CD4-positive, alpha-beta T cell (primary cell): ENCODE measurements at regions of chr12 and their contacts with region 1.

Region 1: GRCh38 chr12:49188914-49189367 is at the start of gene TUBA1A:
- DNase-seq: peak; percentile 92 to 99 (median 94)
- ATAC-seq: peak; percentile 83
- H3K4me3 ChIP-seq: peak within 1 kb of the TSS; percentile 95
- H3K4me3 Mint-ChIP-seq: peak within 1 kb of the TSS; percentile 96
- H3K27ac ChIP-seq: peak within 1 kb of the TSS; percentile 98 to 100
- H3K27ac Mint-ChIP-seq: peak within 1 kb of the TSS; percentile 99
- H3K4me1 ChIP-seq: peaks cover 15% of the 10 kb centered on the region
- H3K4me1 Mint-ChIP-seq: peaks cover 21% of the 10 kb centered on the region
- H3K27me3 ChIP-seq: no peaks in the 10 kb centered on the region
- H3K27me3 Mint-ChIP-seq: no peaks in the 10 kb centered on the region
- CTCF ChIP-seq: no peak
- total RNA-seq, gene TUBA1A: 295 to 305 TPM

Region 2: DNA sequence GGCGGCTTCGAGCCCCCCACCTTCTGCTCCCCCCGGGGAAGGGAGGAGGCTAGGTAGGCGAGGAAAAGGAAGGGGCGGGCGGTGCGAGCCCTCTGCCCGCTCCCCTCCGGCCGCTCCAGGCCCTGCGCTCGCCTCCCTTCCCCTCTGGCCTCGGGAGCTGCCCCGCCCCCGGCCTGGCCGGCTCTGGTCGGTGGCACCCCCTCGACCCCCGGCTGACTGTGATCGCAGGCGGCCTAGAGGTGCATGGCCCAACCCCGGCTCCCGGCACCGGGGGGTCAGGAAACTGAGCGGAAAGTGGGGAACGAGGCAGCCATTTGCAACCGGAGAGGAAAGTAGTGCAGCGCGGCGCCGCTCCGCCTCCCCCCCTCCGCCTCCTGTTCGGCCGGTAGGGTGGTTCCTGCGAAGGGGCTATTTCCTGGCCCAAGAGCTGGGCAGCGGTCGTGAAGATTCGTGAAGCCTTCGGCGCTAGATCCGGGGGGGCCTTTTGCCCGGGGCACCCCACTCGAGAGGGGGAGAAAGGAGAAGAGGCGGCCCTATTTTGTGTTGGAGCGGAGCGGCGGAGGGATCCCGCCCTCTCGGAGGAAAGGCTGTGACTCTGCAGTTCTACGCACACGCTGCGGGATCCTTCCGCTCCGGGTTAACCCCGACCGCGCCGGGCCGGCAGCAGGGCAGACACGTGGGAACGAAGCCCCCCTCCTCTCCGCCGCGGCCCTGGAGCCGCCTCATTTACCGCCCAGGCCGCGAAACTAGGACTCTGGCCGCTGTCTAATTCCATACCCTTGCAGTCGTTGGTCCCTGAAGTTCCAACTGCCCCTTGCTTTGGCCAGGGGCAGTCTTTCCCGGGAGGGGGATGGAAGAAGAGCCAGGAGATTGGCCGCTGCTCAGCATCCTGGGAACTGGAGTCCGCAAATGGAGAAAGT is 128.4 kb before region 1 on chr12 and contains the start of gene KMT2D:
- CTCF ChIA-PET with region 1: no interaction called
- POLR2A ChIA-PET with region 1: interaction called, 10 read pairs
- intact Hi-C with region 1: no loop called
- DNase-seq: peak; percentile 78 to 95 (median 86)
- ATAC-seq: peak; percentile 68
- H3K4me3 ChIP-seq: peak within 1 kb of the TSS; percentile 96
- H3K4me3 Mint-ChIP-seq: peak within 1 kb of the TSS; percentile 97
- H3K27ac ChIP-seq: peak within 1 kb of the TSS; percentile 90 to 93
- H3K27ac Mint-ChIP-seq: peak within 1 kb of the TSS; percentile 96
- H3K4me1 ChIP-seq: peaks cover 56% of the 10 kb centered on the region
- H3K4me1 Mint-ChIP-seq: peaks cover 55% of the 10 kb centered on the region
- H3K27me3 ChIP-seq: no peaks in the 10 kb centered on the region
- H3K27me3 Mint-ChIP-seq: no peaks in the 10 kb centered on the region
- CTCF ChIP-seq: no peak
- total RNA-seq, gene KMT2D: 107 to 110 TPM

Region 3: GRCh38 chr12:49088190-49088931 is 100.6 kb before region 1 on chr12:
- CTCF ChIA-PET with region 1: interaction called, 12 read pairs
- POLR2A ChIA-PET with region 1: interaction called, 16 read pairs
- intact Hi-C with region 1: no loop called
- DNase-seq: peak; percentile 43 to 90 (median 58)
- ATAC-seq: peak; percentile 82
- H3K4me3 ChIP-seq: no peak overlapping the region
- H3K4me3 Mint-ChIP-seq: peak overlapping the region; percentile 60
- H3K27ac ChIP-seq: no peak overlapping the region
- H3K27ac Mint-ChIP-seq: no peak overlapping the region
- H3K4me1 ChIP-seq: peaks cover 55% of the 10 kb centered on the region
- H3K4me1 Mint-ChIP-seq: peaks cover 52% of the 10 kb centered on the region
- H3K27me3 ChIP-seq: peaks cover 48 to 51% of the 10 kb centered on the region in 2 experiments
- H3K27me3 Mint-ChIP-seq: peaks cover 62% of the 10 kb centered on the region
- CTCF ChIP-seq: peak; percentile 85

Region 4: DNA sequence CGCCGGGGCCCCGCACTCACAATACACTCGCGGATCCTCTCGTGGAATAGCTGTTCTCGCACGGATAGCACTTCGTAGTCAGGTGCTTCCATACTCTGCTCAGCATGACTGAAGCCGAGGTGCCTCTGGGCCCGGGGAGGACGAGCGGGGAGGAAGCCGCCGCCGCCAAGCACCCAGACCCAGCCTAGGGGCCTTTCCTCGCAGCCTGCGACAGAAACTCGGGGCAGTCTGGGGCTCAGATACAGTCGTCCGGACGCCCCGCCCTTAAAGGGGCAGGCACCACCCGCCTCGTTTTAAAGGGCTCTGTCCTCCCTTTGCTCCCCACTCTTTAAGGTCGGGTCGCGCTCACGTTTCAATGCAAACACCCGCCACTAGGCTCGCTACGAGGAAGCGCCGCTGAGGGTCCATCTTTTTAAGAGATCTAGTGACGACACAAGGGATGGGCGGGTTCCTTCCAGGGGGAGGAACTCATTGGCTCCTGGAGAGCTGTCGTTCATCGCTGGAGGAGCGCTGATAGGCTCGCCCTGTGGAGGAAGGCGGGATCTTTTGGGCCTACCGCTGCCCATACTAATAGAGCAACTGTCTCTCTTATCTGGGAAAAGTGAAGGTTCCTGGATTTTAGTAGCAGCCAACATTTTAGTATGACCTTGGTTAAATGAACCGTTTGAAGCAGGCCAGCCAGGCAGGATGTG is 78.3 kb before region 1 on chr12 and contains the start of gene LMBR1L:
- CTCF ChIA-PET with region 1: interaction called, 5 read pairs
- POLR2A ChIA-PET with region 1: interaction called, 72 read pairs
- intact Hi-C with region 1: loop called (anchors 1 to 5 kb)
- DNase-seq: peak; percentile 92 to 99 (median 95)
- ATAC-seq: peak; percentile 91
- H3K4me3 ChIP-seq: peak within 1 kb of the TSS; percentile 75
- H3K4me3 Mint-ChIP-seq: peak within 1 kb of the TSS; percentile 89
- H3K27ac ChIP-seq: peak within 1 kb of the TSS; percentile 85 to 94
- H3K27ac Mint-ChIP-seq: peak within 1 kb of the TSS; percentile 97
- H3K4me1 ChIP-seq: peaks cover 41% of the 10 kb centered on the region
- H3K4me1 Mint-ChIP-seq: peaks cover 35% of the 10 kb centered on the region
- H3K27me3 ChIP-seq: no peaks in the 10 kb centered on the region
- H3K27me3 Mint-ChIP-seq: no peaks in the 10 kb centered on the region
- CTCF ChIP-seq: peak; percentile 61
- total RNA-seq, gene LMBR1L: 401 to 418 TPM

Region 5: DNA sequence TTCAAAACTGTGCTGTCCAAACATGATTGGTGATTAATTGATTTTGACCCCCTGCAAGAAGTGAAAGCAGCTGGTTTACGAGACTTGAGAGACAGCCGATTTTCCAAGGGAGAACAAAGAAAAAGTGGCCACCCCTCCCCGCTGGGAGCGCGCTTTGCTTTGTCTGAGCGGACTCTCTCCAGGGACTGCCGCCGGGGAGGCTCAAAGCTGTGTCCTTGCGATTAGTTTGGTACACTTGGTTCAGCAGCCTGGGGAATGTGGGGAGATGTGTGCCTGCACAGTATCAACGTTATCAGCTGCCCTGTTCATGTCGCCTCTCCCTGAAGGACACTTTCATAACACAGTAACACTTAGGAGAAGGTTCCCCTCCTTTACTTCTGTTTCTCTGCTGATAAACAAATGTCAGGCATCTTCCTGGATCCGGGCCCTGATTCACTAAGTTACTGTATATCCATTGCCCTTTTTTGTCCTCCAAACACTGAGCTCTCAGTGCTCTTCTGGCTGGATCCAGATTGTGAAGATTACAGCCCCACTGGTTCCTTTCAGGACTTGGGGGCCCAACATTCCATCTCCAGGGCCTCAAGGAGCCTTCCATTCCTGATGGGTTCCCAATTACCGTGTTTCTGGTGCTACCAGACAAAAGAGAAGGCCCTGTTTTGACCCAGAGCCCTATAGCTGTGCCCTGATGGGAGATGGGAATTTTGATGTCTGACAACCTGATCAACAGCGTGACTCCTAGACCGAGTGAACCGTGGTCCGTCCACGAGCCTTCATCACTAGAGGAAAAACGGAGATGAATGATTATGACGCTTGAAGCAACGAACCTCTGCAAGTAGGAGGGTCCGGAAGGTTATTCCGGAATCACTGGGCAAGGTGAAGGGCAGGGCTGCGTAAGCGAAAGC is 44.2 kb after region 1 on chr12:
- CTCF ChIA-PET with region 1: interaction called, 7 read pairs
- POLR2A ChIA-PET with region 1: interaction called, 52 read pairs
- intact Hi-C with region 1: loop called (anchors 1 to 2 kb)
- DNase-seq: no peak
- ATAC-seq: no peak
- H3K4me3 ChIP-seq: no peak overlapping the region
- H3K4me3 Mint-ChIP-seq: peak overlapping the region; percentile 67
- H3K27ac ChIP-seq: peak overlapping the region in 1 of 2 donors; percentile 26
- H3K27ac Mint-ChIP-seq: peak overlapping the region; percentile 79
- H3K4me1 ChIP-seq: peaks cover 17% of the 10 kb centered on the region
- H3K4me1 Mint-ChIP-seq: peaks cover 15% of the 10 kb centered on the region
- H3K27me3 ChIP-seq: no peaks in the 10 kb centered on the region
- H3K27me3 Mint-ChIP-seq: no peaks in the 10 kb centered on the region
- CTCF ChIP-seq: no peak

Region 6: DNA sequence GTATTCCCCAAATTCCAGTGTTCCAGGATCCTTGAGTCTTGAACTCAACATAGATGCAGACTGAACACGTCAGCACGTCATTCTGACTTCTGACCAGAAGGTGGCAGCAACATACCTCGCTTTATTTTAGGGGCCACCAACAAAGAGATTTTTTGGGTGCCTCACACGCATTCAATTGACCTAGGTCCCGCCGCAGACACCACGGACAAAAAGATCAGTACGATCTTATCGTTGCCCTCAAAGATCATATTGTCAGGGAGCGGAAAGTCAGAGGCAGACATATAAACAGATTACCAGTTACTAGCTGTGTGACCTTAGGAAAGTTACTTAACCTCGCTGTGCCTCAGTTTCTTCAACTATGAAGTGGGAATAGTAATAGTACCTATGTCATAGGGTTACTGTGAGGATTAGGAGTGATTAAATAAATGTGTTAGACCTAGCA is 99.5 kb after region 1 on chr12:
- CTCF ChIA-PET with region 1: no interaction called
- POLR2A ChIA-PET with region 1: no interaction called
- intact Hi-C with region 1: no loop called
- DNase-seq: peak; percentile 50 to 86 (median 64)
- ATAC-seq: peak; percentile 76
- H3K4me3 ChIP-seq: no peak overlapping the region
- H3K4me3 Mint-ChIP-seq: no peak overlapping the region
- H3K27ac ChIP-seq: no peak overlapping the region
- H3K27ac Mint-ChIP-seq: no peak overlapping the region
- H3K4me1 ChIP-seq: no peaks in the 10 kb centered on the region
- H3K4me1 Mint-ChIP-seq: no peaks in the 10 kb centered on the region
- H3K27me3 ChIP-seq: peaks cover 2 to 23% of the 10 kb centered on the region in 2 experiments
- H3K27me3 Mint-ChIP-seq: peaks cover 44% of the 10 kb centered on the region
- CTCF ChIP-seq: peak; percentile 94

Region 7: DNA sequence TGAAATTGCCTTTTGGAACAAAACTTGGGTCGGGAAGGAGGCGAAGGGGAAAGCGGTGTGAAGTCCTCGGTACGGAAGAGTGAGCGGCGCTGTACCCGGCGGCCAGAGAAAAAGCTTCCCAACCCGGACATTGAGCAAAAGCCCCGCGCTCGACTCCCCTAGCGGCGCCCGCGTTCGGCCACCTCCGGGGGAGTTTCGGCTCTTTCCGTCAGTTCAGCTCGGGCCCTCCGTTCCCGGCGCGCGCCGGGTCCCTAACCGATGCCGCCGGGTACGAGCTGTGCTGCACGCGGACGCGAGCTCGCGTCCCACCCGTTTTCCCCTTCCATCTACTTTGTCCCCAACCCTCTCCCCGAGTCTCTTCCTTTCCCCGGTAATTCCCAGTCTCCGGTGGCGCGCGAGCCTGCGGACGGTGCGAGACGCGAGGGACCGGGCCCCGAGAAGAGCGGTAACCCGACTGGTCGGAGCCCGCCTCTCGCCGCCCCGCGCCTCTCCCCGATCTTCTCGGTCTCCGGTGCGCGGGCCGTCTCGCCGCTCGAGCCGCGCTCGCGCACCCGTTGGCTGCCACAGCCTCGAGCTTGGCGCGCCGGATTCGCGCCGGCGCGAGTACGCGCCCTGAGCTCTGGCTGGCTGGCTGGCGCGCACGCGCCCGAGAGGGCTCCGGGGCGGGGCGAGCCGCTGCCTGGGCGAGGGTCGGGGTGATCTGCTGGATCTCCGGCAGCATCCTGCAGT is 177.9 kb after region 1 on chr12:
- CTCF ChIA-PET with region 1: no interaction called
- POLR2A ChIA-PET with region 1: interaction called, 11 read pairs
- intact Hi-C with region 1: no loop called
- DNase-seq: peak; percentile 69 to 92 (median 81)
- ATAC-seq: peak; percentile 82
- H3K4me3 ChIP-seq: peak overlapping the region; percentile 88
- H3K4me3 Mint-ChIP-seq: peak overlapping the region; percentile 99
- H3K27ac ChIP-seq: peak overlapping the region; percentile 66 to 70
- H3K27ac Mint-ChIP-seq: peak overlapping the region; percentile 76
- H3K4me1 ChIP-seq: peaks cover 15% of the 10 kb centered on the region
- H3K4me1 Mint-ChIP-seq: peaks cover 30% of the 10 kb centered on the region
- H3K27me3 ChIP-seq: no peaks in the 10 kb centered on the region
- H3K27me3 Mint-ChIP-seq: no peaks in the 10 kb centered on the region
- CTCF ChIP-seq: no peak